Mammary epithelial cell (primary cell): ENCODE measurements at regions of chr3 and their contacts with region 1.

Region 1: GRCh38 chr3:109806929-109807328 is 469.6 kb upstream of the DPPA4 start:
- DNase-seq: peak; percentile 78
- H3K4me3 ChIP-seq: no peak overlapping the region
- H3K27ac ChIP-seq: peak overlapping the region; percentile 14
- H3K4me1 ChIP-seq: peaks cover 27% of the 10 kb centered on the region
- H3K27me3 ChIP-seq: no peaks in the 10 kb centered on the region
- CTCF ChIP-seq: no peak

Region 2: DNA sequence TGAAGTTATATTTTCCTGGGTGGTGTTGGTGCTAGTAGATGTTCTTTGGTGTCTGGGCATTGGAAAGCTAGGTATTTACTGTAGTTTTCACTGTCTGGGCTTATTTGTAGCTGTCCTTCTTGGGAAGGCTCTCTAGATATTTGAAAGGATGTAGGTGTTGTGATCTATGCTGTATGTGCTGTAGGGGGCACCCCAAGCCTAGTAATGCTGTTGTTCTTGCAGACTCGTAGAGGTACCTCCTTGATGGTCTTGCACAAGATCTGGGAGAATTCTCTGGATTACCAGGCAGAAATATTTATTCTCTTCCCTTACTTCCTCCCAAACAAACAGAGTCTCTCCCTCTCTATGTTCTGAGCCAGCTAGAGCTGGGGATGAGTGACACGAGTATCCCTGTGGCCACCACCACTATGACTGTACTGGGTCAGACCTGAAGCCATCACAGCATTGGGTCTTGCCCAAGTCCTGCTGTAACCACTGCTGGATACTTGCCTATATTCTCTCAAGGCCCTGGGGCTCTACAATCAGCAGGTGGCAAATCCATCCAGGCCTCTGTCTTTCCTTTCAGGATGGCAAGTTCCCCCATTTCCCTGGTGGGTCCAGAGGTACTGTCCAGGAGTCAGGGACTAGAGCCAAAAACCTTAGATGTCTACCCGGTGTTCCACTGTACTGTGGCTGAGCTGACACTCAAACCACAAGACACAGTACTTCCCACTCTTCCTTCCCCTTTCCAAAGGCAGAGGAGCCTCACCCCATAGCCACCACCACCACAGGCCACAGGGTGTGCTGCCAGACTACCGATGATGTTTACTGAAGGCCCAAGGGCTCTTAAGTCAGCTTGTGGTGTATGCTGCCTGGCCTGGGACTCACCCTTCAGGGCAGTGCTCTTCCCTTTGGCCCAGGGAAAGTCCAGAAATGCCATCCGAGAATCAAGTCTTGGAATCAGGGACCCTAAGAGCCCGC is 274.4 kb before region 1 on chr3:
- CTCF ChIA-PET with region 1: no interaction called
- dilution Hi-C with region 1: no loop called
- in situ Hi-C with region 1: no loop called
- intact Hi-C with region 1: loop called (anchors 5 kb)
- DNase-seq: peak; percentile 69
- H3K4me3 ChIP-seq: no peak overlapping the region
- H3K27ac ChIP-seq: no peak overlapping the region
- H3K4me1 ChIP-seq: no peaks in the 10 kb centered on the region
- H3K27me3 ChIP-seq: no peaks in the 10 kb centered on the region
- CTCF ChIP-seq: peak; percentile 18 to 60